ENCODE measurements at regions of chr2 and their contacts with region 1.

Region 1: DNA sequence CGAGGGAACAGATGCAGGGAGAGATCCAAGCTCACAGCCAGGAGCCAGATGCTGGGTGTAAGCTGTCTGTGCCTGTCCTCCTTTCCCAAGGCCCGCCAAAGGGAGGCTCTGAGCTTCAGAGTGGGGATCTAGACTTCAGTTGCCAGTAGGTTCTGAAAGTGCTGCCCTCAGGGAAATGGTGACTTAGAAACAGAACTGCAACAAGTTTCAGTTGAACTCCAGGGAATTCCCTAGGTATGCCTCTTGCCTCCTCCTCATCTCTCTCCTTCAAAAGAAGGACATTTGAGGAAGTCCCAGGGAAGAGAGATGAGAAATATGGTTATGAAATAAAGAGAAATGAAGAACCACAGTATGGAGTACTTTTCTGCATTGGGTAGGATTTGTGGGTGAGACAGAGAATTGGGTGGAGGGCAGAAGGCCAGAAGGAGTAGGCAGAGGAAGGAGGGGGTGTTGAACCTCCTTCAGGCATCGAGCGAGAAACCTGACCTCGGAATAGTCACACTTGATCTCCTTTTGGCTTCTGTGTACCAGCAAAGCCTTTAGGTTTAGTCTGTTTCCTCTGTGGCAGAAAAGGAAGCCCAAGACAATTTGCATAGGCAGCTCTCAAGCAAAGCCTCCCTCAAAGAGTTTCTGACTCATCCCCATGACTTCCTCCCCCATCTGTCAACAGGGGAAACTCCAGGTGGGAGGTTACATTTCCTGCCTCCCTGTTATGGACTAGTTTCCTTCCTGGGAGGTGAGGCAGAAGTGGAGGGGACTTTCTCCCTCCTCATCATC is 45.7 kb downstream of the QPCT start:
- DNase-seq: peak; percentile 81
- H3K4me3 Mint-ChIP-seq: peak overlapping the region; percentile 4
- H3K27ac Mint-ChIP-seq: peak overlapping the region; percentile 76
- H3K4me1 Mint-ChIP-seq: peaks cover 13% of the 10 kb centered on the region
- H3K27me3 Mint-ChIP-seq: no peaks in the 10 kb centered on the region

Region 2: DNA sequence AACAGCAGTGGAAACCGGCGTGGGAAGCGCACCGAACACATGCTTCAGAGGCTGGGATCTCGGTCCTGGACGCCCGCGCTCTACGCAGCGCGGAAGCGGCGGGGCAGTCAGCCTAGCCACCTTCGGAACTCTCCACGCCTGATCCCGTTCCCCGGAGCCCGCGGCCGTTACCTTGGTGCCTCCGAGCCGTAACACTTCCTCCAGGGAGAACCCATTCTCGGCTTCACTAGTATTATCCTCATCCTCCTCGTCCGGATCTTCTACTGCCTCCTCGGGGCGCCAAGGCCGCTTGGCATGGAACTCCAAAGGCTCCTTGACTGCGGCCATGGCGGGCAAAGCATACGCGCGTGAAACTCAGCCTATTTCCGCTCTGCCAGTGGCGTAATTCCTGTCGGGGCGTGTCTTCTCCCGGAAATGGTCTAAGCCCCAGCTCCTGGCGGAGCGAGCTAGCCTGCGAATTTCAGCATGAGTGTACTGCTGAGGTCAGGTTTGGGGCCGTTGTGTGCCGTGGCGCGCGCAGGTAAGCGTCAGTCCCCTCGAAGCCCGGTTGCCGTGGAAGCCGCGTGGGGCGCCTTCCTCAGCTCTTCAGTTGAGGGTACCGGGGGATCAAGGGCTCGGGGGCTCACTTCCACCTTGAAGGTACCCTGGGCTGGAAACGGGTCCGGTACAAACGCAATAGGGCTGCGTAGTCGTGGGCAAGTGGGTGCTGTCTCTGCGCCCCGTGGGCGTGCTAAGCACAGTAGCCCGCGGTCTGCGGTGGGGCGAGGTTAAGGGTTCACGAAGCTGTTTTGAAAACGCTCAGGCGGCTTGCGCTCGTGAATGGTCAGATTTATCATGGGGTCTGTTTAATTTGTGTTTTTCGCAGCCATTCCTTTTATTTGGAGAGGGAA is 158.7 kb before region 1 on chr2 and contains the starts of genes CEBPZ and NDUFAF7:
- CTCF ChIA-PET with region 1: no interaction called
- POLR2A ChIA-PET with region 1: no interaction called
- intact Hi-C with region 1: loop called (anchors 5 kb)
- DNase-seq: peak; percentile 95
- H3K4me3 Mint-ChIP-seq: no peak within 1 kb of the TSS
- H3K27ac Mint-ChIP-seq: no peak within 1 kb of the TSS
- H3K4me1 Mint-ChIP-seq: peaks cover 36% of the 10 kb centered on the region
- H3K27me3 Mint-ChIP-seq: no peaks in the 10 kb centered on the region
- total RNA-seq, gene CEBPZ: 62.3 to 74.6 TPM
- total RNA-seq, gene NDUFAF7: 22.8 to 23.0 TPM

Region 3: DNA sequence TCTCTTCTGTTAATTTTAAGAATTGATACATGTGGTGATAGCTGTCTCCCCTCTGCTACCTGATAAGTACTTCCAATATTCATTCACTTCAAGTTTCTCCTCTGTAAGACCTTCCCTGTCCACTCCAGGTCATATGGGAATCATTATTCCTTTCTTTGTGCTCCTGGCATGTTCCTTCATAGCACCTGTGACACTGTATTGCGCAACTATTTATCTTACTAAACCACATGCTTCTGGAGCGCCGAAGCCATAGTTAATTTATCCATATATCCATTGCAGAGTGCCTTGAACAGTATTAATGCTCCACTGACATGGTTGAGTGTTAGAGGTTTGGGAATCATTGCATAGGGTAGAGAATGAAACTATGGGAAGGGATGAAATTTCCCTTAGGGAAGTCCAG is 57.6 kb before region 1 on chr2:
- CTCF ChIA-PET with region 1: no interaction called
- POLR2A ChIA-PET with region 1: no interaction called
- intact Hi-C with region 1: no loop called
- DNase-seq: no peak
- H3K4me3 Mint-ChIP-seq: no peak overlapping the region
- H3K27ac Mint-ChIP-seq: no peak overlapping the region
- H3K4me1 Mint-ChIP-seq: no peaks in the 10 kb centered on the region
- H3K27me3 Mint-ChIP-seq: peaks cover 3% of the 10 kb centered on the region

Region 4: DNA sequence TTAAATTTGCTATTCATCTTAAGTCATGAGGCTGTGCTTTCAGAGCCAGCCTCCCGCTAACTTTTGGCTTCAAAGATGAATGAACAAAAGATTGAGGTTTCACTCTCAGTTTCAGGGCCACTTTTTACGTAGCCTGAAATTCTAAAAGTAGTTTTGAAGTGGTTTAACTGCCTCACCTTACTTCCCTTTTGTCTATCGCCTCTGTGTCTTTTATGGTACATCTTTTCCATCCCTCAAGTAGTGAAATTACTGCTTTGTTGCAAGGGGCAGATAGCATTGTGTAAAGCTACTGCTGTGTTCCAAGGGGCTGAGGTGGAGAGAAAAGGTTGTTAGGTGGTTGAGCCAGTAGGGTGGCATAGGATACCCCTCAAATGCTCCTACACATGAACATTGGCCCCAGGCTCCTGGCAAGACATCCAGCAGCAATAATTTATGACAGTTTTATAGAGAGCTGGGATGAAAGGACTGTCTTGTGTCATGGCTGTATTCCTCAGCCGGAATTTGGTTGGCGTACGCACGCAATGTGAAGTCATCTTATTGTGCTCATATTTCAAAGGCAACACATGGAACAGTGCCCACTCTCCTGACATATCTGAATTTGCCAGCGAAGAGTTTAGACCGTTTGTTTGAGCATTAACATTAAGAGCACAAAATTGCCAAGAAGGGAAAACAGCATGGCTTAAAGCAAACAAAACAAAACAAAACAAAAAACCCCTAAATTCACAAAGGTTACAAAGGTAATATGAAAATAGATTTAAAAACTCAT is 13.6 kb before region 1 on chr2:
- CTCF ChIA-PET with region 1: interaction called, 28 read pairs
- POLR2A ChIA-PET with region 1: interaction called, 33 read pairs
- intact Hi-C with region 1: loop called (anchors 1 kb)
- DNase-seq: peak; percentile 53
- H3K4me3 Mint-ChIP-seq: peak overlapping the region; percentile 20
- H3K27ac Mint-ChIP-seq: peak overlapping the region; percentile 58
- H3K4me1 Mint-ChIP-seq: peaks cover 30% of the 10 kb centered on the region
- H3K27me3 Mint-ChIP-seq: peaks cover 53% of the 10 kb centered on the region

Region 5: GRCh38 chr2:37570773-37571586 is 180.8 kb after region 1 on chr2:
- CTCF ChIA-PET with region 1: no interaction called
- POLR2A ChIA-PET with region 1: no interaction called
- intact Hi-C with region 1: loop called (anchors 1 kb)
- DNase-seq: peak; percentile 85
- H3K4me3 Mint-ChIP-seq: no peak overlapping the region
- H3K27ac Mint-ChIP-seq: peak overlapping the region; percentile 16
- H3K4me1 Mint-ChIP-seq: peaks cover 29% of the 10 kb centered on the region
- H3K27me3 Mint-ChIP-seq: no peaks in the 10 kb centered on the region

Region 6: DNA sequence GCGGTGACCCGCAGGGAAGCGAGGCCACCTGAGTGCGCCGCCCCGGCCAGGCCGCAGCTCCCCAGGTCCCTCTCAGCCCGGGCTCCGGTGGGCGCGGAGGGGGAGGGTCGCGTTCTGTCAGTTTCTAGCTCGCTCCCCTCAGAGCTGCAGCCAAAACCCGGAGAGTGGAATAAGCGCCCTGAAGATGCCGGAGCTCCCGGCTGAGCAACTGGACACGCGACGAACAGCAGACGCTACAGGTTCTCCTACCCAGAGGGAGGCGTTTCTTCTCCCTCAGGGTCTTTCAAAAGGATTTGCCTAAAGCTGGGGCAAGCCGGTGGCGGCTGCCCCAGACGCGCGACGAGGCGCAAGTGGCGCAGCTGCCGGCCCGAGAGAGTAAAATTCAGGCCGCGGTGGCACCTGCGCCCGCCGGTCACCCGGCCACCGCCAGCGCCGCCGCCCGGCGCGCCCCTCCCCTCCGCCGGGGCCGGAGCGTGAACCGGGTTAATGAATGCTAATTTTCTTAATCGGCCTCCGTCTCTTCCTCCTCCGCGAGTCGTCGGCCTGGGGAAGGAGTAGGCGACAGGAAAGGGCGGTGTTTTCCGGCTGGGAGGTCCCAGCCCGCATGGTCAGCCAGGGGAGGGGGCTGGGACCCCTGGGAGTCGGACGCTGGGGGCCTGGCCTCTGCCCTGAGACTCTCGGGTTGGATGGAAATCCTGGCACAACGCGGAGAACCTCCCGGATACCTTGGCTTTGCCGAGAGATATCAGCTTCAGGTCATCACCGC is 282.1 kb after region 1 on chr2:
- CTCF ChIA-PET with region 1: interaction called, 4 read pairs
- POLR2A ChIA-PET with region 1: no interaction called
- intact Hi-C with region 1: loop called (anchors 5 kb)
- DNase-seq: peak; percentile 78
- H3K4me3 Mint-ChIP-seq: peak overlapping the region; percentile 95
- H3K27ac Mint-ChIP-seq: peak overlapping the region; percentile 80
- H3K4me1 Mint-ChIP-seq: peaks cover 39% of the 10 kb centered on the region
- H3K27me3 Mint-ChIP-seq: no peaks in the 10 kb centered on the region

Region 7: DNA sequence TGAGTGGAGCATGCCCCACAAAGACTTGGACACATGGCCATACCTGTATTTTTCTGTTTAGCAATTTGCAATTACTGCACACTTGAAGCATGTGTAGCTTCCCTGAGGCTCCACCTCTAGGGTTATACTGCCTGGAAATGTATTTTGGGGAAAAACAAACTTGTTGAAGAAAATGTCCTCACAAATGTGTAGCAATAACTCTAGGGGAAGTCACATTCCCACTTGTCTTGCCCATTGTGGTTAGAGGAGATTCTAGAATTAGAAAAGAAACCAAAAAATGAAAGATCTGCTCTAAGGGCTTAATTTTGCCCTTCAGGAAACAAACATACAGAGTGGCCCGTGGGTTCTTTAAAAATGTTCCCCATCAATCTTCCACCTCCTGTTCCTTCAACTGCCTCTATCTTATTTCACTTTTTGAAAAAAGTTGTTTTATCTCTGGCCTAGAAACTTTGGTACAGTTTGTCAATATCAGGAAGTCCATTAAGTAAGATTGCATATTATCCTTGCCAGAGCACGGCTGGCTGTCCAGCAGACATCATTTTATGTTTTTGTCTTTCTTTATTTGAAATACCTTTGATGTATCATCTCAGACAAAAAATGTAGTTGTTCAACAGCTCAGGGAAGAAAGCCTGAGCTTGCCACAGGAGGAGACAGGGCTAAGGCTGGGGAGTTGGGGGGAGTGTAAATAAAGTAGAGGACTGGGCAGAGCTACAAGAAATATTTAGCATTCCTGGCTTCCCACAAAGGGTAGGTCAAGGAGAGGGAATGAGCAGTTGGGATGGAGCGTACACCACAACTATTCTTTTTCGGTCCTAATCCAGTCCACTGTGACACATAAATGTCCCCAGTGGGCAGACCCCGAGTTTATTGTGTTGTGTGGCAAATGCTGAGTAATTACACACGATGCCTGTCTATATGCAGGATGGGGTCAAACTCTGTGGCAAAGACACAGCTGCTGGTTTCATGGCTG is 378.1 kb after region 1 on chr2:
- CTCF ChIA-PET with region 1: no interaction called
- POLR2A ChIA-PET with region 1: no interaction called
- intact Hi-C with region 1: no loop called
- DNase-seq: no peak
- H3K4me3 Mint-ChIP-seq: no peak overlapping the region
- H3K27ac Mint-ChIP-seq: no peak overlapping the region
- H3K4me1 Mint-ChIP-seq: peaks cover 6% of the 10 kb centered on the region
- H3K27me3 Mint-ChIP-seq: no peaks in the 10 kb centered on the region

Region 8: GRCh38 chr2:37877457-37878315 is 487.5 kb after region 1 on chr2:
- CTCF ChIA-PET with region 1: interaction called, 139 read pairs
- POLR2A ChIA-PET with region 1: interaction called, 5 read pairs
- intact Hi-C with region 1: no loop called
- DNase-seq: no peak
- H3K4me3 Mint-ChIP-seq: no peak overlapping the region
- H3K27ac Mint-ChIP-seq: no peak overlapping the region
- H3K4me1 Mint-ChIP-seq: peaks cover 7% of the 10 kb centered on the region
- H3K27me3 Mint-ChIP-seq: peaks cover 16% of the 10 kb centered on the region

Region 9: GRCh38 chr2:38264396-38265281 is 874.5 kb after region 1 on chr2:
- CTCF ChIA-PET with region 1: no interaction called
- POLR2A ChIA-PET with region 1: no interaction called
- intact Hi-C with region 1: loop called (anchors 10 kb)
- DNase-seq: no peak
- H3K4me3 Mint-ChIP-seq: no peak overlapping the region
- H3K27ac Mint-ChIP-seq: no peak overlapping the region
- H3K4me1 Mint-ChIP-seq: peaks cover 39% of the 10 kb centered on the region
- H3K27me3 Mint-ChIP-seq: peaks cover 7% of the 10 kb centered on the region

Measured in activated CD4-positive, alpha-beta memory T cell treated with anti-CD3 and anti-CD28 coated beads for 36 hours (primary cell).